ENCODE measurements at regions of chr4 and their contacts with region 1.

Region 1: DNA sequence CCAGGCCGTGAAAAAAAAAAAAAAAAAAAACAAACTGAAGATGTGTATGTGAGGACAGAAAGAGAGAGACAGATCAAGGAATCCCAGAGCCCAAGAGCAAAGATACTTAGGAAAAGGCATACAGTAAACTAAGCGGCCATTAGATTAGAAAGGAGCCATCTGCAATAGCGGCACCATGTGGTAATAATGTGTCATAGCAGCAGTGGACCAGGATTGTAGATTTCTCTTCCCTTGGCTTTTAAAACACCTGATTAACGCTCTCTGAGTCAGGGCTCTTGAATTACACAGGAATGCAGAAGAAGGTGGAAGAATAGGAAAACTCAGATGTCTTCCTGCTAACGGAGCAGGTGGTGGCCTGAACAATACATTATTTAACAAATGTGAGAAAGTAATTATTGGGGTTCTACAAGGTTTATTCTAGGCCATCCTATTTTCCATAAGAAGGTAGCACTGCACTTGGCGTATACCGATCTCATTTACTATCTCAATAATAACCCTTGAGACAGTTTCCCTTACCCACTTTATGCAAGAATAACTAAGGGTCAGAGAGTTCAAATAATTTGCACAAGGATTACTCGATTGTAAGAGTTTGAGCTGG is 182.7 kb downstream of the KCNIP4 start:
- DNase-seq: peak; percentile 75
- H3K4me3 ChIP-seq: no peak overlapping the region
- H3K27ac ChIP-seq: no peak overlapping the region
- H3K4me1 ChIP-seq: peaks cover 12% of the 10 kb centered on the region
- H3K27me3 ChIP-seq: peaks cover 33 to 50% of the 10 kb centered on the region in 2 experiments
- CTCF ChIP-seq: peak; percentile 74 to 78
- POLR2A ChIP-seq: no peak

Region 2: GRCh38 chr4:20422398-20422797 is 1343.5 kb before region 1 on chr4:
- CTCF ChIA-PET with region 1: no interaction called
- POLR2A ChIA-PET with region 1: no interaction called
- dilution Hi-C with region 1: no loop called
- intact Hi-C with region 1: loop called (anchors 2 kb)
- DNase-seq: peak; percentile 78
- H3K4me3 ChIP-seq: no peak overlapping the region
- H3K27ac ChIP-seq: no peak overlapping the region
- H3K4me1 ChIP-seq: peaks cover 9% of the 10 kb centered on the region
- H3K27me3 ChIP-seq: no peaks in the 10 kb centered on the region
- CTCF ChIP-seq: peak; percentile 51 to 63
- POLR2A ChIP-seq: no peak

Region 3: GRCh38 chr4:20839957-20840356 is 926.0 kb before region 1 on chr4:
- CTCF ChIA-PET with region 1: no interaction called
- POLR2A ChIA-PET with region 1: no interaction called
- dilution Hi-C with region 1: no loop called
- intact Hi-C with region 1: loop called (anchors 1 kb)
- DNase-seq: peak; percentile 88
- H3K4me3 ChIP-seq: no peak overlapping the region
- H3K27ac ChIP-seq: peak overlapping the region; percentile 86
- H3K4me1 ChIP-seq: peaks cover 31% of the 10 kb centered on the region
- H3K27me3 ChIP-seq: no peaks in the 10 kb centered on the region
- CTCF ChIP-seq: no peak
- POLR2A ChIP-seq: peak; percentile 34

Region 4: DNA sequence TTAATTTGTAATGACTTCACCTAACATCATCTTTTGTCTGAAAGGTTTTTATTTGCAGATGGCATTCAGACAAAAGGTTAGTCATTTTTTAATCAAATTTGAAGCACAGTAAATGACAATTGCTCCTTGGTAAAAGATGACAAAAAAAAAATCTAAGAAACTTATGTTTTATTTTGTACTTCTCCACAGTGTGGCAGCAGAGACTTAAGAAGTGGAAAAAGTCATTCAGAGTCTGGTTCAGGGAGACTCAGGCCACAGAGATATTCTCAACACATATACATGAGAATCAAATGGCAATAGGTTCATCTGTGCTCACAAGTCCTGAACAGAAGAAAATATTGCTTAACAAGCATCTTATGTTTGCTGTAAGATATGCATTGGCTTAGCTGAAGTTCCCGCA is 253.6 kb before region 1 on chr4:
- CTCF ChIA-PET with region 1: interaction called, 403 read pairs
- POLR2A ChIA-PET with region 1: no interaction called
- dilution Hi-C with region 1: no loop called
- intact Hi-C with region 1: loop called (anchors 1 kb)
- DNase-seq: peak; percentile 71
- H3K4me3 ChIP-seq: no peak overlapping the region
- H3K27ac ChIP-seq: no peak overlapping the region
- H3K4me1 ChIP-seq: no peaks in the 10 kb centered on the region
- H3K27me3 ChIP-seq: peaks cover 34 to 55% of the 10 kb centered on the region in 2 experiments
- CTCF ChIP-seq: peak; percentile 15 to 17
- POLR2A ChIP-seq: no peak

Region 5: DNA sequence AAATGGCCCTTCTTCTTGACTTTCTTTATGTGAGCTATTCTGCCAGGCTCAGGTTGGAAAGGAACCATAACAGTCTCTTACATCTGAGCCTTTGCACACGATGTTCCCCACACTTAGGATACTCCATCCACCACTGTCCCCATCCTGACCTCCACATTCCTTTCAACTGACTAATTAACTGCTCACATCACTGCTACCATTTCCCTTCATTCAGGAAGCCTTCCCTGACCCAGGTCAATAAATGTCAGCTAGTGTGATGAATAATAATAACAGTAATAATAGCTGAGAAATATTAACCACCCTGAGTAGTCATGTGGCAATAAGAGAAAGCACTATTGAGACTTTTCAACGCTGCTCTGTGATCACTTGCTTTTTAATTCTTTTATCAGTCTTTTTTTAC is 109.1 kb before region 1 on chr4:
- CTCF ChIA-PET with region 1: interaction called, 4 read pairs
- POLR2A ChIA-PET with region 1: no interaction called
- dilution Hi-C with region 1: no loop called
- intact Hi-C with region 1: loop called (anchors 1 kb)
- DNase-seq: peak; percentile 88
- H3K4me3 ChIP-seq: no peak overlapping the region
- H3K27ac ChIP-seq: no peak overlapping the region
- H3K4me1 ChIP-seq: peaks cover 11% of the 10 kb centered on the region
- H3K27me3 ChIP-seq: peaks cover 0 to 2% of the 10 kb centered on the region in 2 experiments
- CTCF ChIP-seq: no peak
- POLR2A ChIP-seq: no peak

Region 6: GRCh38 chr4:22515145-22515887 is 749.4 kb after region 1 on chr4:
- CTCF ChIA-PET with region 1: no interaction called
- POLR2A ChIA-PET with region 1: no interaction called
- dilution Hi-C with region 1: no loop called
- intact Hi-C with region 1: loop called (anchors 1 kb)
- DNase-seq: peak; percentile 77
- H3K4me3 ChIP-seq: peak overlapping the region; percentile 62 to 85 (median 68)
- H3K27ac ChIP-seq: peak overlapping the region; percentile 4
- H3K4me1 ChIP-seq: peaks cover 17% of the 10 kb centered on the region
- H3K27me3 ChIP-seq: no peaks in the 10 kb centered on the region
- CTCF ChIP-seq: no peak
- POLR2A ChIP-seq: no peak